HCT116 (cell line): ENCODE measurements at regions of chr7 and their contacts with region 1.

Region 1: DNA sequence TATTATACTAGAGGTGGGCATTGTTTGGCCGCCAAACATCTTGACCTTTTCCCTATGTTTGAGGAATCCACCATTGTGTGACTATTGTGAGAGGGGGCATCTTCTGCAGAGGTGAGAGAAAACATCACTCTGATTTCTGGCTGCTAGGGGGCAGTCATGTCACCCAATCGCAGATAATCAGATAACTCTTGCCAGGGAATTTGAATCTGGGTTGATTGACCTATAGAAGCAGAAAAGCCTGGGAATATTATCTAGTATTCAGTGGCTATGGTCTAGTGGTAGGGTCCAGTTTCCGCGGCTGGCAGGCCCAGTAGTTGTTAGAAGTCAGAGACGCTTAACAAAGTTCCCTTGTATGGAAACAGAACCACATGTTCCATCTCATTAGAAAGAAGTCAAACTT is 808.5 kb downstream of the PHTF2 start:
- DNase-seq: no peak
- ATAC-seq: peak; percentile 63
- H3K4me3 ChIP-seq: no peak overlapping the region
- H3K27ac ChIP-seq: no peak overlapping the region
- H3K4me1 ChIP-seq: peaks cover 0 to 4% of the 10 kb centered on the region in 2 experiments; a peak in 1 of 4 replicates
- H3K27me3 ChIP-seq: no peaks in the 10 kb centered on the region
- CTCF ChIP-seq: peak; percentile 10 to 56 (median 49); a peak in 4 of 6 replicates
- POLR2A ChIP-seq: no peak
- RAD21 ChIP-seq: peak; percentile 38

Region 2: DNA sequence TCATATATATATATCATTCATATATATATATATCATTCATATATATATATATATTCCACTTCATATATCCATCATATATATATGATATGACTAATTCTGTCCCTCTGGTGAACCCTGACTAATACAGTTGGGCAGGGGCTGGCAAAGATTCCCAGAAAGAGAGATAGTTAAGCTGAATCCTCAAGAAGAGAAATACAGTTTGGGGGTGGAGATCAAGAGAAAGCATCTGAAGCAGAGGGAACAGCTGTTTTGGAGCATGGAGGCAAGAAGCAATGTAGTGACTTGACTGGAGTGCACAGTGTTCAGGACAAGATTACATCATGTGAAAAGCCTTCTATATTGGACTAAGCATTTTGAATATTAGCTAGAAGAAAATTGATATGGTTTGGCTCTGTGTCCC is 305.7 kb after region 1 on chr7:
- CTCF ChIA-PET with region 1: no interaction called
- POLR2A ChIA-PET with region 1: no interaction called
- RAD21 ChIA-PET with region 1: no interaction called
- intact Hi-C with region 1: loop called (anchors 5 kb)
- DNase-seq: no peak
- ATAC-seq: no peak
- H3K4me3 ChIP-seq: no peak overlapping the region
- H3K27ac ChIP-seq: no peak overlapping the region
- H3K4me1 ChIP-seq: no peaks in the 10 kb centered on the region
- H3K27me3 ChIP-seq: no peaks in the 10 kb centered on the region
- CTCF ChIP-seq: no peak
- POLR2A ChIP-seq: no peak
- RAD21 ChIP-seq: no peak